HCT116 (cell line): ENCODE measurements at regions of chr11 and their contacts with region 1.

Region 1: DNA sequence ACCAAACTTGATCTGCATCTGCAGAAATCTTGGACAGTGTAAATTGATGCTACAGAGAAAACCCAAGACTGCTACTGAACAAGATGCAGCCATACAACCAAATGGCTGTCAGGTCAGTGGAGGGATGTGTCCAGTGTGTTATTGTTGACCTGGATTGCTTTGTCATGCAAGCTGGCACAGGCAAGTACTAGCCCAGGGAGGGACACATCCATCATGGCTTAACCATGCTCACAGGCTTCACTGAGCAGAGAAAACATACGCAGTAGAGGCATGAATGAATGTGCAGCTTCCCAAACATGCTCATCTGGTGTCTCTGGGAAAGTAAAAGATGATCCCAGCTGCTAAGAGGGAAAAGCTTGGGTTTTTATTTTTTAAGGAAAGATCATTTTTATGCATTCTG is 93.6 kb downstream of the MTNR1B start:
- DNase-seq: no peak
- ATAC-seq: no peak
- H3K4me3 ChIP-seq: no peak overlapping the region
- H3K27ac ChIP-seq: no peak overlapping the region
- H3K4me1 ChIP-seq: 0 out of 4 replicates have a peak, but pooled peaks cover 0 to 4% of the 10 kb centered on the region in 2 experiments
- H3K27me3 ChIP-seq: no peaks in the 10 kb centered on the region
- CTCF ChIP-seq: no peak
- POLR2A ChIP-seq: no peak
- RAD21 ChIP-seq: no peak

Region 2: DNA sequence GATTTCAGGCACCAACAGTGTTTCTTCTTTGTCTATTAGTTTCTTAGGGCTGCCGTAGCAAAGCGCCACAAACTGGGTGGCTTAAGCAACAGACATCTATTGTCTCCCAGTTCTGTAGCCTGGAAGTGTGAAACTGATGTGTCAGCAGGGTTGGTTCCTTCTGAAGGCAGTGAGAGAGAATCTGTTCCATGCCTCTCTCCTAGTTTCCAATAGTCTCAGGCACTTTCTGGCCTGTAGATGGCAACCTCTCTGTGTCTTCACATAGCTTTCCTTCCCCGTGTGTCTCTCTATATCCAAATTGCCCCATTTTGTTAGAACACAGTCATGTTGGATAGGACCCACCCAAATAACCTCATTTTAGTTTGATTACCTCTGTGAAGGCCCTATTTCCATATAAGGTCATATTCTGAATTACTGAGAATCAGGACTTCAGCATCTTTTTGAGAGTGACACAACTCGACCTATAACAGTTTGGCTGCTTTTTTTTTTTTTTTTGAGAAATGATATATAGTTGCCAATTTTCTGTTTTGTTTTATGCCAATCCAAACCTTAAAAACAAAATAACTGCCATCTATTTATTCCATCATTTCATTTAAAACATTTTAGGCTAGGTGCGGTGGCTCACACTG is 26.5 kb after region 1 on chr11:
- CTCF ChIA-PET with region 1: interaction called, 11 read pairs
- POLR2A ChIA-PET with region 1: no interaction called
- RAD21 ChIA-PET with region 1: no interaction called
- intact Hi-C with region 1: no loop called
- DNase-seq: peak; percentile 52
- ATAC-seq: peak; percentile 99
- H3K4me3 ChIP-seq: no peak overlapping the region
- H3K27ac ChIP-seq: no peak overlapping the region
- H3K4me1 ChIP-seq: no peaks in the 10 kb centered on the region
- H3K27me3 ChIP-seq: no peaks in the 10 kb centered on the region
- CTCF ChIP-seq: peak; percentile 33 to 75 (median 60); a peak in 4 of 6 replicates
- POLR2A ChIP-seq: no peak
- RAD21 ChIP-seq: peak; percentile 51

Region 3: DNA sequence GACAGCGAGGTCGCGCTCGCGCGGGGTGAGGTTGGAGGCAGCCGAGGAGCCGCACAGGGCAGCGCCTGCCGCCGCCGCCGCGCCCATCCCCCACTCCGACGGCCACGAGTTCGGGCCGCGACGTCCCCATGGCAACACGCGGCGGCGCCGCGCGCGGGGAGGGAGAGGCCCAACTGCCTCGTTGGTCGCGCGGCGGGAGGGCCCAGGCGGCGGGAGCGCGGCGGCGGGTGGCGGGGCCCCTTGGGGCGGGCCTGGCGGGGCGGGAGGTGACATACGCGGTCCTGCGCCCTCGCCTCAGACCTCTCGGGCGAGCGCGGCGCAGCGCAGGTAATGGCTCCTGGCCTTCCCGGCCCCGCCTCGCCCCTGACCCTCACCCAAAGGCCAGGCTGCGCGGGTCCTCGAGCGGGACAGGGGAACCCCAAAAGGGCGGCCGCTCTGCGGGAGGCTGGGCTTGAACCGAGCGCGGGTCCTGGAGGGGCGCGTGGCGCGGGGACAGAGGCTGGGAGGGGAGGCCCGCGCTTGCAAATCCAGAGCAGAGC is 267.4 kb after region 1 on chr11 and contains the start of gene DEUP1:
- CTCF ChIA-PET with region 1: no interaction called
- POLR2A ChIA-PET with region 1: no interaction called
- RAD21 ChIA-PET with region 1: no interaction called
- intact Hi-C with region 1: no loop called
- DNase-seq: no peak
- ATAC-seq: no peak
- H3K4me3 ChIP-seq: no peak within 1 kb of the TSS
- H3K27ac ChIP-seq: no peak within 1 kb of the TSS
- H3K4me1 ChIP-seq: no peaks in the 10 kb centered on the region
- H3K27me3 ChIP-seq: no peaks in the 10 kb centered on the region
- CTCF ChIP-seq: no peak
- POLR2A ChIP-seq: no peak
- RAD21 ChIP-seq: no peak
- total RNA-seq, gene DEUP1: not detected